Activated B cell treated with CpG ODN at 0.5 μM for 24 hours (primary cell): ENCODE measurements at regions of chr5 and their contacts with region 1.

Region 1: GRCh38 chr5:134225618-134226440 is at the start of gene PPP2CA:
- DNase-seq: peak; percentile 100
- ATAC-seq: peak; percentile 79
- H3K4me3 Mint-ChIP-seq: peak within 1 kb of the TSS; percentile 94
- H3K27ac Mint-ChIP-seq: peak within 1 kb of the TSS; percentile 95
- H3K4me1 Mint-ChIP-seq: peaks cover 51% of the 10 kb centered on the region
- H3K27me3 Mint-ChIP-seq: no peaks in the 10 kb centered on the region
- CTCF ChIP-seq: no peak
- total RNA-seq, gene PPP2CA: 103 and 118 TPM in 2 replicates

Region 2: DNA sequence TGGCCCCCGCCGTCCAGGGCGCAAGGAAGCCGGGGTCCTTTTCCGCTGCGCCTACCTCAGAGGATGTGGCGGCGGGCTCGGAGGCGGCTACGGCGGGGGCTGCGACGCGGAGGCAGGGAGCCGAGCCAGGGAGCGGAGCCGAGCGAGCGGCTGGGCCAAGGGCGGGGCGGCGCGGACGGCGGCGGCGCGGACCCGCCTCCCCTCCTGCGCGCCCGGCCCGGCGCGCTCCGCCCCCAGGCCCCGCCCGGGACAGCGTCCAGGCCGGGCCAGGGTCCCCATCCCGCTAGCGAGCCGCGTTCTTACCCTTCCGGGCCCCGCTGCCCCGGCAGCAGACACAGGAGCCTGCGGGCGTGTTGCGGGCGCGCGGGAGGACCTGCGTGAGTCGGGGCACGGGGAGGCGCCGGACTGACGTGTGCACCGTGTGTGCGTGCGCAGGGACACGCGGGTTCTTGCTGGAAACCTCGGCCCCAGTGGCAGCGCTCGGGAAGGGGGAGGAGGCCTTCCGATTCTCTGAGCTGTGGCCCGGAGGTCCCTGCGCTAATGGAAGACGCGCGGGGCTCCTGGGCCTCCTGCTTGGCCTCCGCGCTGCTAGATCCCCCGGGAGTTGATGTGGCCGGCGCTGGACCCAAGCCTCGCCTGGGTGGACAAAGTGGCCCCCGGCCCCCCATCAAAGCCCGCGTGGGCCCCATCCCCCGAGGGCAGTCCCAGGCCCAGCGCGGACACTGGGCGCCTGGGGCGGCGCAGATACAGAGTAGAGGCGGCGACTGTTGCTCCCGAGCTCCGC is 221.0 kb before region 1 on chr5 and contains the start of gene VDAC1:
- CTCF ChIA-PET with region 1: no interaction called
- POLR2A ChIA-PET with region 1: interaction called, 15 read pairs
- intact Hi-C with region 1: no loop called
- DNase-seq: peak; percentile 81
- ATAC-seq: peak; percentile 82
- H3K4me3 Mint-ChIP-seq: peak within 1 kb of the TSS; percentile 92
- H3K27ac Mint-ChIP-seq: peak within 1 kb of the TSS; percentile 93
- H3K4me1 Mint-ChIP-seq: peaks cover 38% of the 10 kb centered on the region
- H3K27me3 Mint-ChIP-seq: no peaks in the 10 kb centered on the region
- CTCF ChIP-seq: no peak
- total RNA-seq, gene VDAC1: 158 and 164 TPM in 2 replicates

Region 3: GRCh38 chr5:134184155-134185135 is 41.4 kb before region 1 on chr5:
- CTCF ChIA-PET with region 1: interaction called, 3 read pairs
- POLR2A ChIA-PET with region 1: interaction called, 5 read pairs
- intact Hi-C with region 1: loop called (anchors 2 kb)
- DNase-seq: peak; percentile 59
- ATAC-seq: peak; percentile 99
- H3K4me3 Mint-ChIP-seq: no peak overlapping the region
- H3K27ac Mint-ChIP-seq: no peak overlapping the region
- H3K4me1 Mint-ChIP-seq: peaks cover 3% of the 10 kb centered on the region
- H3K27me3 Mint-ChIP-seq: no peaks in the 10 kb centered on the region
- CTCF ChIP-seq: no peak

Region 4: DNA sequence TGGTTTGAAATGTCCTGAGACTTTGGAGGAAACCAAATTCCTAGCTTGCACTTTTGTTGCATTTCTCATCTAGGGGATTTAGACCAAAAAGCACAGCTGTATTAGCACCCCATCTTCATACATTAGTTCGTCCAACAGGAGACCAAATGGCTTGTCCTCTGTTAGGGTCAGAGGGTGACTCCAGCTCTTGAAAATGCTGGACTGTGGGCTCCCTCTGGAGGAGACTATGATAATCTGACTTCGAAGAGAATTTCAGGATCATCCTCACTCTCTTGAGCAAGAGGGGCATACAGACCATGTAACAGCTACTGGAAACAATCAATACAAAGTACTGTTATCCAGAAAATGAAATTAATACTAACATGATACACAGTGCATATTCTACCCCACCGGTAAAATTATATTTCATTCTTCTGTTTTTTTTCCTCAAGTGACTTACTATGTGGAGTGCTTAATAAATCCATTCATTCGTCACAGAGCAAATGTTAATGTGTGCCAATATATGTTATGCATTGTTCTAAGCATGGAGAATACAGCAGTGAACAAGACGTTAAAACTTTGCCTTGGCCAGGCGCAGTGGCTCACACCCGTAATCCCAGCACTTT is 63.8 kb after region 1 on chr5:
- CTCF ChIA-PET with region 1: interaction called, 4 read pairs
- POLR2A ChIA-PET with region 1: interaction called, 3 read pairs
- intact Hi-C with region 1: loop called (anchors 2 kb)
- DNase-seq: no peak
- ATAC-seq: peak; percentile 68
- H3K4me3 Mint-ChIP-seq: no peak overlapping the region
- H3K27ac Mint-ChIP-seq: no peak overlapping the region
- H3K4me1 Mint-ChIP-seq: no peaks in the 10 kb centered on the region
- H3K27me3 Mint-ChIP-seq: peaks cover 5% of the 10 kb centered on the region
- CTCF ChIP-seq: no peak

Region 5: DNA sequence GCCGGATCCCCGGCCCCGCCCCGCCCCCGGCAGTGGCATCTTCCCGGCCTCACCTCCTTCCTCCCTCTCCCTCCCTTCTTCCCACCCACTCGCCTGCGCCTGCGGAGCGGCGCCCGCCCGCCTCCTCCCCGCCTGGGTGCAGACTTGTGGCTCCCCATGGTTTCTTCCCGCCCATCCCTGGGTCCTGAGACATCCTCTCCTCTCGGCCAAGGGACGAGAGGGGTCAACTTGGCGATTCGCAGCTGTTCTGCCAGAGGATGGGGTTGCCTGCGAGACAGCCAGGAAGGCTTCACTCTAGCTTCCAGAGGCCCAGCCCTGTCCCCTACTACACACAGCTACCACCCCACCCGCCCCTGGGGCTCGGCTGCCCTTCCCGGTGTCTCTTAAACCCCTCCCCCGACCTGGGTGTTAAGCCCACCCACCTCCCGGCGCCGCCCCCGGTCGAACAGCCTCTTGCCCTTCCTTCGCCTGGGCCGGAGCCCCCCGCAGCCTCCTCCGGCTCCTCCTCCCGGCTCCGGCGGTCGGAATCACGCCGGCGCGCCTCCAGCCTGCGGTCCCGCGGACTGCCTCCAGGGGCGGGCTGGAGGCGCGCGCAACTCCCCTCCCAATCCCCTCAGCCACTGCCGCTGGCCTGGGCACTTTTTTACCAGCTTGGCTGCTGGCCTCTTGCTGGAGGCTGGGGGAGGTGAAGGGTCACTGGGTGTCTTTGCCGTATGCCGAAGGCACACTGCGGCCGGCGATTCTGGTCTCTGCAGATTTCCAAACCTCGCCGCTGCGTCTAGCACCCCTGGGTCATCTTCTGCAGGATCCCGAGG is 301.5 kb after region 1 on chr5:
- CTCF ChIA-PET with region 1: no interaction called
- POLR2A ChIA-PET with region 1: interaction called, 17 read pairs
- intact Hi-C with region 1: loop called (anchors 1 kb)
- DNase-seq: peak; percentile 73
- ATAC-seq: peak; percentile 49
- H3K4me3 Mint-ChIP-seq: peak overlapping the region; percentile 98
- H3K27ac Mint-ChIP-seq: peak overlapping the region; percentile 85
- H3K4me1 Mint-ChIP-seq: peaks cover 58% of the 10 kb centered on the region
- H3K27me3 Mint-ChIP-seq: no peaks in the 10 kb centered on the region
- CTCF ChIP-seq: no peak

Region 6: GRCh38 chr5:134586866-134587524 is 361.2 kb after region 1 on chr5:
- CTCF ChIA-PET with region 1: interaction called, 5 read pairs
- POLR2A ChIA-PET with region 1: no interaction called
- intact Hi-C with region 1: loop called (anchors 5 kb)
- DNase-seq: peak; percentile 79
- ATAC-seq: peak; percentile 91
- H3K4me3 Mint-ChIP-seq: peak overlapping the region; percentile 15
- H3K27ac Mint-ChIP-seq: no peak overlapping the region
- H3K4me1 Mint-ChIP-seq: peaks cover 18% of the 10 kb centered on the region
- H3K27me3 Mint-ChIP-seq: no peaks in the 10 kb centered on the region
- CTCF ChIP-seq: peak; percentile 20

Region 7: GRCh38 chr5:134738133-134738962 is 512.5 kb after region 1 on chr5 and contains the start of gene CAMLG:
- CTCF ChIA-PET with region 1: no interaction called
- POLR2A ChIA-PET with region 1: no interaction called
- intact Hi-C with region 1: loop called (anchors 1 kb)
- DNase-seq: peak; percentile 94
- ATAC-seq: peak; percentile 97
- H3K4me3 Mint-ChIP-seq: peak within 1 kb of the TSS; percentile 86
- H3K27ac Mint-ChIP-seq: peak within 1 kb of the TSS; percentile 93
- H3K4me1 Mint-ChIP-seq: peaks cover 33% of the 10 kb centered on the region
- H3K27me3 Mint-ChIP-seq: no peaks in the 10 kb centered on the region
- CTCF ChIP-seq: no peak
- total RNA-seq, gene CAMLG: 22.2 and 23.9 TPM in 2 replicates

Region 8: DNA sequence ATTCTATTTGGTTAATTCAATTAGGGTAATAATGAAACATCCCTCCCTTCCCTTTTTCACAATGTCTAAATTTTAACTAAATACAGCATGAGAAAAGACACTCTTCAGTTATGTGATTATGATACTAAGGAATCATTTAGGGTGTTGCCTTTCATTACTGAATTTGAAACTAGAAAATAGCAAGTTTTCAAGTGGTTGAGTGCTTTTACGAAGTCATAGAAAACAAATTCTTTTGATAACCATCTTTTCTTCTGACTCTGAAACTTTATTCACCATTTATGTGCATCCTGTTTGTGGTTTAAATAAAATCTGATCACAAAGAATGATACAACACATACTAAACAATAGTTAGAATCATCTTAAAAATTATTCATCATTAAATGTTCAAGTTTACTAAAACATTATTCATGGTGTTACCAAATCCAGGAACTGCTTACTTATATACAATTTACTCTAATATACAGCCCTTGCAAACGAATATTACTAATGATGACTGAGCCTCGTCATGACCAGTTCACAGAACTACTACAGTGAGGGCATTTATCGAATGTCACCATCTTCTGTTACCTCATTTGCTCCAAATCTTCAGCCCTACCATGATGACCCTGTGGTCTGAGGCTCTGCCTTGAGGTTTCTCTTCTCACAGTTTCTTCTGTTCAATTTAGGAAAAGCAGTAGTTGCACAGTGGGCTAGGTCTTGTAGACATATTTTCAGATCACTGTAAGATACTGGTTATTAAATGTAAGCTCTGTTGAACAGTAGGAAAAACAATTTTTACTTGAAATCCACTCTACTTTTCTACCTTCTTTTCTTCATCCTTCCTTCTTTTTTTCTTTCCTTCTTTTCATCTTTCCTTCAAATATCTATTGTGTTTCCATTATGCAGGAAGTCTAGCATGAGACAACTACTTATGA is 1688.1 kb after region 1 on chr5:
- CTCF ChIA-PET with region 1: no interaction called
- POLR2A ChIA-PET with region 1: no interaction called
- intact Hi-C with region 1: no loop called
- DNase-seq: no peak
- ATAC-seq: no peak
- H3K4me3 Mint-ChIP-seq: no peak overlapping the region
- H3K27ac Mint-ChIP-seq: no peak overlapping the region
- H3K4me1 Mint-ChIP-seq: no peaks in the 10 kb centered on the region
- H3K27me3 Mint-ChIP-seq: peaks cover 43% of the 10 kb centered on the region
- CTCF ChIP-seq: no peak